Activated naive CD4-positive, alpha-beta T cell treated with anti-CD3 and anti-CD28 coated beads, Interleukin-2, amount 10 ng/mL, durations not matched to agents 7 days and 5 days (primary cell): ENCODE measurements at regions of chr3 and their contacts with region 1.

Region 1: GRCh38 chr3:132730891-132731580 is 8.8 kb upstream of the NPHP3 start:
- DNase-seq: no peak
- H3K4me3 Mint-ChIP-seq: no peak overlapping the region
- H3K27ac Mint-ChIP-seq: no peak overlapping the region
- H3K4me1 Mint-ChIP-seq: no peaks in the 10 kb centered on the region
- H3K27me3 Mint-ChIP-seq: peaks cover 23% of the 10 kb centered on the region

Region 2: DNA sequence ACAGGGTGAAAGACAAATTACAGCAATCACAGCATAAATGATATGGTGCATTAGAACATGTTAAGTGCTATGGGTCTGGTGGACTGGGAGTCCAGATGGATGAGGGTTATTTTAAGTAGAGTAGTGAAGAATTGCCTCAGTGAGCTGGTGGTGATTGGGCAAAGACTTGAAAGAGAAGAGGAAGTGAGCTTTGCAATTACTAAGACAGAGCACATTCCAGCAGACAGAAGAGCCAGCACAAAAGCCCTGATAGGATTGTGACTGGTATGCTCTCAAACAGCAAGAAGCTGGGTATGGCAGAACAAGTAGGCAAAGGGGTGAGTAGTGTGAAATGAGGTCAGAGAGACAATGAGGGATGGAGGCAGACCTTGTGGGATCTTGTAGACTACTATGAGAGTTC is 136.0 kb before region 1 on chr3:
- CTCF ChIA-PET with region 1: no interaction called
- DNase-seq: no peak
- H3K4me3 Mint-ChIP-seq: no peak overlapping the region
- H3K27ac Mint-ChIP-seq: no peak overlapping the region
- H3K4me1 Mint-ChIP-seq: peaks cover 3% of the 10 kb centered on the region
- H3K27me3 Mint-ChIP-seq: no peaks in the 10 kb centered on the region

Region 3: DNA sequence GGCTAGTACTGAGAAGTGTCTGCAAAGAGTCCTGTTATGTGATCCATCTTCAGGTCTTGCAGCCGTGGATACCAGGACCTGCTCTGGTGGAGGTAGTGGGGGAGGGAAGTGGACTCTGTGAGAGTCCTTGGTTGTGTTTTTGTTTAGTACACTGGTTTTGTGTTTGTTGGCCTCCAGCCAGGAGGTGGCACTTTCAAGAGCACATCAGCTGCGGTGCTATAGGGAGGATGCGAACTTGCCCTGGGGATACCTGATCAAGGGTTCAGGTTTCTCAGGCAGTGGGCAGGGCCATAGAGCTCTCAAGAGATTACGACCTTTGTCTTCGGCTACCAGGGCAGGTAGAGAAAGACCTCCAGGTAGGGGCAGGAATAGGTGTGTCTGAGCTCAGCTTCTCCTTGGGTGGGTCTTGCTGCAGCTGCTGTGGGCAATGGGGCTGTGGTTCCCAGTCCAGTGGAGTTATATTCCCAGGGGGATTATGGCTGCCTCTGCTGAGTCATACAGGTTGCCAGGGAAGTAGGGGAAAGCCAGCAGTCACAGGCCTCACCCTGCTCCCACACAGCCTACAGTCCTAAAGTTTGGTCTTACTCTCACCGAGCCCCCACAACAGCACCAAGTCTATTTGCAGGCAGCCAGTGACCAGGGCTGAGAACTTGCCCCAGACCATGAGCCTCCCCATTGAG is 124.0 kb after region 1 on chr3:
- CTCF ChIA-PET with region 1: no interaction called
- DNase-seq: no peak
- H3K4me3 Mint-ChIP-seq: no peak overlapping the region
- H3K27ac Mint-ChIP-seq: no peak overlapping the region
- H3K4me1 Mint-ChIP-seq: no peaks in the 10 kb centered on the region
- H3K27me3 Mint-ChIP-seq: no peaks in the 10 kb centered on the region

Region 4: GRCh38 chr3:133384331-133385027 is 653.4 kb after region 1 on chr3:
- CTCF ChIA-PET with region 1: interaction called, 16 read pairs
- DNase-seq: peak; percentile 55
- H3K4me3 Mint-ChIP-seq: no peak overlapping the region
- H3K27ac Mint-ChIP-seq: no peak overlapping the region
- H3K4me1 Mint-ChIP-seq: no peaks in the 10 kb centered on the region
- H3K27me3 Mint-ChIP-seq: peaks cover 14% of the 10 kb centered on the region

Region 5: GRCh38 chr3:133426721-133427120 is 695.7 kb after region 1 on chr3:
- CTCF ChIA-PET with region 1: interaction called, 15 read pairs
- DNase-seq: no peak
- H3K4me3 Mint-ChIP-seq: no peak overlapping the region
- H3K27ac Mint-ChIP-seq: no peak overlapping the region
- H3K4me1 Mint-ChIP-seq: peaks cover 3% of the 10 kb centered on the region
- H3K27me3 Mint-ChIP-seq: peaks cover 13% of the 10 kb centered on the region